ENCODE measurements at regions of chr5 and their contacts with region 1.

Region 1: DNA sequence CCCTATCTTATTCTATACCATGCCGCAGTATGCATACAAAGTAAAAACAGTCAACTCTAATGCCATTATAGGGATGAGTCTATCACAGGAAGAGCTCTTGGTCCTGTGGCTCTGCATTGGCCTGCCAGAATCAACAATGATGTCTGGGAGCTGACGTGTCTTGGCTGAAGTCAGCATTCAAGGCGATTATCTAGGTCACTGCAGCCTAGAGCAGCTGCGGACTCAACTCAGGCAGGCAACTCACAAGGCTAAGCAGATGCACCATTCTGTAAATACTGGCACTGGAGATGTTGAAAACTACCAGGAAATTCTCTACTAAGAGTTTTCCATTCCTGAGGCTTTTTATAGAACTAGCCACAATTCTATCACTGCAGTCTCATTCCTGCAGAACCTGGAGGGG is 13.3 kb downstream of the SPATA9 start:
- DNase-seq: peak; percentile 40 to 83
- ATAC-seq: peak; percentile 95 to 97 (median 96)
- H3K4me3 ChIP-seq: no peak overlapping the region
- H3K27ac ChIP-seq: peak overlapping the region in 9 of 10 donors; percentile 25 to 68 (median 60)
- H3K4me1 ChIP-seq: peaks cover 0 to 43% (median 23%) of the 10 kb centered on the region in 9 donors
- H3K27me3 ChIP-seq: no peaks in the 10 kb centered on the region
- CTCF ChIP-seq: no peak

Region 2: DNA sequence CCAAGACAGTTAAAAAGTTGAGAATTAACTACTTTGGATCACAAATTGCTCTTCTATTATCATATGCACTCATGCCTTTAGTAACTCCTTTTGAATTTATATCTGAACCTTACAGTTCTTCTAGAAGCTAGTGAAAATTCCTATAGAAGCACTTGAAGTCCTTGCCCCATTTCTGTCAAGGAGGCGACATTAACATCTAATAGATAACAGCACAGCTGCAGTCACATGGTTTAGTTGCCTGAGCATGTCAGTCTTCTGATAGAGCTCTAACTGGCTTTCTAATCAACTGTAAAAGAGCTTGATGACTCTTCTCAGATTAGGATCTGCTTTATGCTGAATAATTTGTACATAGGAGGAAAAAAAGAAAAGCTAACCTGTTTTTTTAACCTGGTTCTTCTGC is 14.0 kb before region 1 on chr5:
- intact Hi-C with region 1: no loop called
- DNase-seq: no peak
- ATAC-seq: no peak
- H3K4me3 ChIP-seq: no peak overlapping the region
- H3K27ac ChIP-seq: no peak overlapping the region
- H3K4me1 ChIP-seq: no peaks in the 10 kb centered on the region
- H3K27me3 ChIP-seq: no peaks in the 10 kb centered on the region
- CTCF ChIP-seq: no peak

Region 3: GRCh38 chr5:95718203-95718602 is 48.7 kb after region 1 on chr5:
- intact Hi-C with region 1: loop called in 2 of 10 experiments (anchors 5 to 10 kb)
- DNase-seq: no peak
- ATAC-seq: no peak
- H3K4me3 ChIP-seq: no peak overlapping the region
- H3K27ac ChIP-seq: no peak overlapping the region
- H3K4me1 ChIP-seq: peaks cover 0 to 32% (median 21%) of the 10 kb centered on the region in 9 donors
- H3K27me3 ChIP-seq: no peaks in the 10 kb centered on the region
- CTCF ChIP-seq: no peak

Region 4: DNA sequence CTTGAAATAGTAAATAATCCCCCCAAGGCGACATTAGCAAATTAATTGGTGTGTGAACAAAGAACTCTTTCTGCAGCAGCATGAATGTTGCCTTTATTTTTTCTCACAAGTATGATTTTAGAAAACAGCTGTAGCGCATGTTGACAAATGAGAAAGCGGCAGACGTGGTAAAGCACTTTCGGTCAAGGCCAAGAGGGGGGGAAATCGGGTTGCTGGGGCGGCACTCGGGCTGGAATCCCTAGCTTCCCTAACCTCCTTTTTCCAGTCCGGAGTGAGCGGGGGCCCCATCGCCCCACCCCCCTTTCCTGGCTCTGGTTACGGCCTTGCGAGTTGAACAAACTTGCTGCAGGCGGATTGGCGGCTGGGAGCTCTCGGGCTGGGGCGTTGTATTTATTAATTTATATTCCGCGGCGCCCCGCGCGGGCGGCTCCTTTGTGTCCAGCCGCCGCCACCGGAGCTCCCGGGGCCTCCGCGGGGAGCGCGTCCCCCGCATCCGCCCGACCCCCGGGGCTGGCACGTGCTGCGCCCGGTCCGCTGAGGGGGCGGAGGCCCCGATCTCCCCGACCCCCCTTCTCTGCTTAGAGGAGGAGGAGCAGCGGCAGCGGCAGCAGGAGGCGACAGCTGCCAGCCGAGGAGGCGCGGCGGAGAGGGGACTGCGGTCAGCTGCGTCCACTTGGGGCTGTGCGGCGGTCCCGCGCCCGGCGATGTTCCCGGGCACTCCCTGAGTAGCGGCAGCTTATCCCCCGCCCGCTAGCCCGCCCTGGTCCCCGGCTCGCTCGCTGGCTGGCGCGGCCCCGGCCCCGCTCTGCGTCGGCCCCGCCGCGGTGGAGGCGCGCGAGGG is 61.4 kb after region 1 on chr5 and contains the start of gene RHOBTB3:
- intact Hi-C with region 1: loop called (anchors 2 to 10 kb)
- DNase-seq: peak; percentile 90 to 91
- ATAC-seq: peak; percentile 74 to 88 (median 78)
- H3K4me3 ChIP-seq: peak within 1 kb of the TSS; percentile 56 to 84 (median 78)
- H3K27ac ChIP-seq: peak within 1 kb of the TSS; percentile 79 to 98 (median 93)
- H3K4me1 ChIP-seq: peaks cover 0 to 75% (median 48%) of the 10 kb centered on the region in 9 donors
- H3K27me3 ChIP-seq: peaks cover 0 to 9% (median 0%) of the 10 kb centered on the region in 7 donors
- CTCF ChIP-seq: peak in 1 of 9 donors; percentile 25
- total RNA-seq, gene RHOBTB3: 73.1 to 124 (median 94.4) TPM

Region 5: DNA sequence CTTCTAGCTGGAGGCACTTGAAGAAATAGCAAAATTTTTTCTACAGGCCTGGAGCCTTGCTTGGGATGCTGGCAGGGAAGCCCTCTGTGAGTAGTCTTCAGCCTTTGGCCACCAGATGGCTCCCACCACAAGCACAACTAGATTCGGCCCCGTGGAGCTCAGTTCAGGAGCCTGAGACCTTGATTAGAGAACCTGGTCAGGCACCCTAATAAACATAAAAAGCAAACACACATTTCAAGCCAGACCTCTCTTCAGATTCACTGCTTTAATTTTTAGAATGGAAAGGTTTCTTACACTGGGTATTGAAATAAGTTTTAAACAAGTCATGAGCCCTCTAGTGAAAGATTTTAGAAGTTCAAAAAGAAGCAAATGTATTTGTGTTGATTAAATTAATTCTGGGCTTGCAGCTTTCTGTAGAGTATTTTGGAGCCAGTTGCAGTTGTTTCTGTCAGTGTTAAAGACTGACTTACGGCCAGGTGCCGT is 111.6 kb after region 1 on chr5:
- intact Hi-C with region 1: loop called in 3 of 10 experiments (anchors 5 to 10 kb)
- DNase-seq: peak; percentile 68 to 84
- ATAC-seq: peak; percentile 88 to 95 (median 92)
- H3K4me3 ChIP-seq: no peak overlapping the region
- H3K27ac ChIP-seq: peak overlapping the region in 8 of 10 donors; percentile 5 to 77 (median 46)
- H3K4me1 ChIP-seq: peaks cover 0 to 52% (median 30%) of the 10 kb centered on the region in 9 donors
- H3K27me3 ChIP-seq: no peaks in the 10 kb centered on the region
- CTCF ChIP-seq: peak in 8 of 9 donors; percentile 70 to 96 (median 91)

Region 6: DNA sequence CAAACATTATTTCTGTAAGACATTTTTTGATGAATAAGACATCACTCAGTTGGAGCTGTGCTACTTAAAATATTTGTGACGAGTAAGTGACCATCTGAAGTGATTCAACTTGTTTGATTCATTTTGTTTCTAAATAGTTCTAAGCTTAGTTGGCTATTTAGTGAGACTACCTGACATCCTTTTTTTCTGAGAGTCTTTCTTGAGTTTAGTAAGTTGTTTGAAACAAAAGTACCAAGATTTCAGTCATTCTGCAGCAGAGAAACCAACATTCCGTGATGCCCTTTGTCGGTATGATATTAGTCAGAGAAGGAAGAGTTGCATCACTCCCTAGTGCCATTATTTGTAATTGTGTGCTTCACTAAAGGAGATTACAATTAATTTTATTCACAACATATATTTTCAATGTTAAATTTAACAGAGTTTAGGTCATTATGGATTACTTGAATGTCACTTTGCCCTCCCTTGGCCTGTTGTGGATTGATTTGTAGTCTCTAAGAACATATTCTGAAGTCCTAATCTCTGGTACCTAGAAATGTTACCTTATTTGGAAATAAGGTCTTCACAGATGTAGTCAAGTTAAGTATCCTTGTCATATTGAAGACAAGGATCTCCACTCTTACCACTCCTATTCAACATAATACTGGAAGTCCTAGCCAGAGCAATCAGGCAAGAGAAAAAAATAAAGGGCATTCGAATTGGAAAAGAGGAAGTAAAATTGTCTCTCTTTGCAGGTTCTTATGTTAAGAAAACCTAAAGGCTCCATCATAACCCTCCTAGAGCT is 551.3 kb after region 1 on chr5:
- intact Hi-C with region 1: no loop called
- DNase-seq: no peak
- ATAC-seq: no peak
- H3K4me3 ChIP-seq: no peak overlapping the region
- H3K27ac ChIP-seq: no peak overlapping the region
- H3K4me1 ChIP-seq: peaks cover 0 to 3% (median 0%) of the 10 kb centered on the region in 9 donors
- H3K27me3 ChIP-seq: no peaks in the 10 kb centered on the region
- CTCF ChIP-seq: no peak